Mucosa of descending colon (tissue), 3 donors: ENCODE measurements at regions of chr6 and their contacts with region 1.

Region 1: GRCh38 chr6:7243179-7243981 is 69.6 kb downstream of the SSR1 start:
- DNase-seq: peak in 1 of 3 donors; percentile 69
- ATAC-seq: peak; percentile 59
- H3K4me3 ChIP-seq: no peak overlapping the region
- H3K4me1 ChIP-seq: peaks cover 30% of the 10 kb centered on the region
- CTCF ChIP-seq: peak; percentile 77

Region 2: DNA sequence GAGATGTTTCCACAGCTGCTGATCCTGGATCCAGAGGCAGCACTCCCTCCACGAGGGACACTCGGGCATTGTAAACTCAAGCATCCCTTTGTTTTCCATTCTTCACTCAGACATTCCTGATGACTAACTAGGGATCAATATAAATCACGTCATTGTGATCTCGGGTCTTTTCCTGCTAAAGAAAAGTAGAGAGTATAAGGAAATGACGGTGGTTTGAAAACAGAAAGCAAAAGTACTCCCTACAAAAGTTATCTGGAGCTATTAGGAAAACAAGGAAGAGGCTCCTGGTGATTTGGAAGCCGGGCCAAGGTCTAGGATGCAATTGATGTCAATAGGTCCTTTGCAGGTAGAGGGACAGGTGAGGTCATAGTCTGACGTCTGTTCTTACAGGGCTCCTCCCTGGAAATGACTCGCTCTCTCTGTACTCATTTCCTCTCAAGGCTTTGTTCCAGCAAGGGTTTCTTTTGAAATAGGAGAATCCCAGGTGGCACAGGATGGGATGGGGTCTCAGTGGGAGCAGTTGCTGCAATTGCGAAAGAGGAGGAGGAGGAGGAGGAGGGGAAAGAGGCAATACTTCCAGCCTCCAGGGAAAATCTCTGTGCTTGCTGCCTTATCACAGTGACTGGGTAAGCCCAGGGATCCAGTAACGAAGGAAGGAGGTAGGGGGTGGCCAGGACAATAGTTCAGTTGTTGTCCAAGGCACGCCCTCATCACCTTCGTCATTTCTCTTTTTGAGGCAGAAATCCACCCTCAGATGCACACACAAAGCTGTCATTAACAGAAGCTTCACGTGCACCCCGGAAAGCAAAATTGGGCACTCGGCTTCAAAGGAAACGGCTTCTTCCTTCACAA is 432.0 kb before region 1 on chr6:
- intact Hi-C with region 1: loop called in 1 of 2 experiments (anchors 5 kb)
- DNase-seq: peak in 2 of 3 donors; percentile 53 to 83
- ATAC-seq: peak; percentile 96
- H3K4me3 ChIP-seq: no peak overlapping the region
- H3K4me1 ChIP-seq: peaks cover 7% of the 10 kb centered on the region
- CTCF ChIP-seq: no peak